ENCODE measurements at regions of chr7 and their contacts with region 1.

Region 1: DNA sequence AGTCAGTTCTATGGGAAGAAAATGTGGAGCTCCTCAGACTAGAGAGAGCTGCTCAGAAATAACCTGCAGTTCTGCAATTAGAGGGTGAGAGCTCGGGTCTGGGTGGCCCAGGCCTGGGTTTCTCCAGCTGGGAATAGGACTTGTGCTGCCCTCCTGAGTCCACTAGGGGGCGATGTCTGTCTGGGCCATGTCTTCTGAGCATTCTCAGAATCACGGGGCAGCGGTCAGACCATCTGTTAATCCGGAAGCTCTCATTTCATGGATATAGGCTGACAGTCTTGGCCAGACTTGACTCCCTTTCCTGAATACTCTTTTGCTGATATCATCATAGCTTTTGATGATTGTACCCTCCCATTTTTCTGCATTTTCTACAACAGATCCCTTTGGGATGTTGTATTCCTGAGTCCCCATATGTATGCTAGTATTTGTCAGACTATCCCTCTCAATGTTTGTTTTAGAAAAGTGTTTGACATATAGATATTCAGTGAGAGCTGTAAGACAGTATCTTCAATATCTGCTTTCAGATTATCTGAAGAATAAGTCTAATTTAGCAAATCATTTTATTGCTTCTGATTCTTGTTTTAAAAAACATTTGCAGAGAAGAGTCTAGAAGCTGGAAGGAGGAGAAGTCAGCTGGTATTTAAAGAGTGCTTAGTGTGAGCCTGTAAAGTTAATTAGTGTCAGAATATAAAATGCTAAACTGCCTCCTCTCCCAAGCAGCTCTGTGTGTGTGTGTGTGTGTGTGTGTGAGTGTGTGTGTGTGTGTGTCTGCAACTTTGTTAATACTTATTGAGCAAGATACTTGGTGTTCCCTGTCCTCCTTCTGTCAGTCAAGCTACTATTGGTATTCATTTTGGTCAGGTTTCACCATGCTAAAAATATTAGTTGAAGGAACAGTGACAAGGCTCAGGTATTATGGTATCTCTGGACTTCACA is 38.0 kb downstream of the STARD3NL start:
- DNase-seq: peak; percentile 88
- H3K4me3 ChIP-seq: no peak overlapping the region
- H3K27ac ChIP-seq: peak overlapping the region; percentile 43
- H3K4me1 ChIP-seq: peaks cover 13% of the 10 kb centered on the region
- H3K27me3 ChIP-seq: no peaks in the 10 kb centered on the region
- CTCF ChIP-seq: peak; percentile 98 to 99
- POLR2A ChIP-seq: no peak

Region 2: DNA sequence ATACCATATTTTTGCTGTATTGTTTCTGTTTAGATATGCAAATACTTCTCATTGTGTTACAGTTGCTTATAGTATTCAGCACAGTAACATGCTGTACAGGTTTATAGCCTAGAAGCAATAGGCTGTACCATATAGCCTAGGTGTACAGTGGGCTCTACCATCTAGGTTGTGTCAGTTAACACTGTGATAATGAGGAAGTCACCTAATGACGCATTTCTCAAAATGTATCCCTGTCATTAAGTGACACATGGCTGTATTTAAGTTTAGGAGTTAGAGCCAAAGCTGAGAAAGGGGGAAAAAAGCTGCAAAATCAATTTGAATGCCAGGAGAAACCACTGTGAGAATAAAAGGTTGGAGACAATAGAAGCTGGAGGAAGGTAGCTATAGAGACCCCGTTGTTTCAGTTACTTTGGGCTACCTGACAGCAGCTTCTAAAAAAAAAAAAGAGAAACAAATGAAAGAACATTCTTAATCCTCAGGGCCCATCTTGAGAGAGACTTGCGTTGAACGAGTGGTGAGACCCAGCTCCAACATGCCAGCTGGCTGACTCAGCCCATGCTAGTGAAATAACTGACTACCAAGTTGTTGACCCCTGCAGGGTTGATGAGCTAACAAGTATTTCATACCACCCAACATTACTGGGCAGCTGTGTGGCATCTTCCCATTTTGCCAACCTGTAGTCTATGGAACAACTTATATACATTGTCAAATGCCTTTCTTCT is 29.2 kb before region 1 on chr7:
- CTCF ChIA-PET with region 1: interaction called, 62 read pairs
- POLR2A ChIA-PET with region 1: no interaction called
- dilution Hi-C with region 1: no loop called
- intact Hi-C with region 1: no loop called
- DNase-seq: no peak
- H3K4me3 ChIP-seq: no peak overlapping the region
- H3K27ac ChIP-seq: no peak overlapping the region
- H3K4me1 ChIP-seq: peaks cover 5% of the 10 kb centered on the region
- H3K27me3 ChIP-seq: no peaks in the 10 kb centered on the region
- CTCF ChIP-seq: no peak
- POLR2A ChIP-seq: no peak

Region 3: DNA sequence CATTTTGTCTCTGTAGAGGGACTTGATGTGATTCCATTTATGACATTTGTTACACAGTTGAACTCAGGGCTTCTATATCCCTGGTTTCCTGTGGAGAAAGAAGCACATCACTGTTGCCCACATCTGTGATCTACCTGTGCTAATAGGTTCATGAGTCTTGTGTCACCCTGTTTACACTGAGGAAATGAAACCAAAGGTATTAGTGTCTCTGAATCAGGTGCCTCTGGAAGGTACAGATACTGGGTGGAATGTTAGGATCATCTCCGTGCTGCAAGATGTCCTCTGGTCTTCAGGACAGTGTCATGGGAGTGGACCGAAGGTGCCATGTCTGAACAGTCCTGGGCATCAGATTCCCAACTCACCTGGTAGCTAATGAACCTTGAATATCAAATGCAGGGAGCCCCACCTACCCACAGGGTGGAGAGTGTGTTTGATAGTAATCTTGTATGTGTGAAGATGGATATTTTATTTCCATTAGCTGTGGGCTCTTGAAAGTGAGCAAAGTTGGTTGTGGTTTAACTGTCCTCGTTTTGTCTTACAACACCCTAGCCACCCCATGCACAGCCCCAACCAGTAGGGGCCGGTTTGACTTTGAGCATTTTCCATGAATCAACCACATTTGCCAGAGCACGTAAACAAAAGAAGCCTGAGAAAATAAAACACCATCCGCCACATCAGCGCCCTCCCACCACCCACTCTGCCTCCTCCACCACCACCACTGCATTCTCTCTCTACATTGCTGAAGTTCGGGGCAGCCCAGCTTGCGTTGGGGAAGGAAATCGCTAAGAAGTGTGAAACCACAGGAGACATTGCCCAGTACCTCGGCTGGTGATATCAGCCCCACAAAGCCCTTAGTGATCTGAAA is 16.7 kb after region 1 on chr7:
- CTCF ChIA-PET with region 1: interaction called, 27 read pairs
- POLR2A ChIA-PET with region 1: no interaction called
- dilution Hi-C with region 1: no loop called
- intact Hi-C with region 1: no loop called
- DNase-seq: no peak
- H3K4me3 ChIP-seq: no peak overlapping the region
- H3K27ac ChIP-seq: no peak overlapping the region
- H3K4me1 ChIP-seq: no peaks in the 10 kb centered on the region
- H3K27me3 ChIP-seq: no peaks in the 10 kb centered on the region
- CTCF ChIP-seq: no peak
- POLR2A ChIP-seq: no peak

Region 4: GRCh38 chr7:38276096-38276877 is 60.3 kb after region 1 on chr7:
- CTCF ChIA-PET with region 1: no interaction called
- POLR2A ChIA-PET with region 1: no interaction called
- dilution Hi-C with region 1: no loop called
- intact Hi-C with region 1: no loop called
- DNase-seq: no peak
- H3K4me3 ChIP-seq: no peak overlapping the region
- H3K27ac ChIP-seq: no peak overlapping the region
- H3K4me1 ChIP-seq: no peaks in the 10 kb centered on the region
- H3K27me3 ChIP-seq: peaks cover 0 to 3% of the 10 kb centered on the region in 2 experiments
- CTCF ChIP-seq: no peak
- POLR2A ChIP-seq: no peak

Region 5: DNA sequence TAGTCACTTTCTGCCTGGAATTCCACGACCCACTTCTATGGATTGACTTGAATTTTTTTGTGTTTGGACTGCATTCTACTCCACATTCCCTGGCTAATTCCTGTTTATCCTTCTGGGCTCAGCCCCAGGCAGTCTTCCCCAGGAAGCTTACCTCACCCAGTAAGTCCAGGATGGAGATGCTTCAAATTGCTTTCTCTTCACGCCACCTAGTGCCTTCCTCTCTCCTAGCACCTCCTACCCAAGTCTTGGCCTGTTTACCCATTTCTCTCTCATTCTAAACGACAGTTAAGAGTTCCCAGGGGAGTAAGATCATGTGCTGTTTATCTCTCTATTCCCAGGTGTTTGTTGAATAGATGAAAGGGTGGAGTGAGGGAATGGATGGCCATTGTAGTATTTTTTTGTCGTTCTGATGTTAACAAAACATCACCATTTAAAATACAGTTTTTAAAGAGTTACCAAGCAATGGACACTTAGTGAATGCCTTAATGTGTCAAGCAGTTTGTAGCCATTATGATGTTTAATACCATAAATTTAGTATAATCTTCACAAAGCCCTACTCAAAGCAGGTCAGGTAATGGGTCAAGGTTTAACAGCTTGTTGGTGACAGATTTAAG is 102.9 kb after region 1 on chr7:
- CTCF ChIA-PET with region 1: interaction called, 61 read pairs
- POLR2A ChIA-PET with region 1: no interaction called
- dilution Hi-C with region 1: no loop called
- intact Hi-C with region 1: loop called (anchors 1 kb)
- DNase-seq: peak; percentile 74
- H3K4me3 ChIP-seq: no peak overlapping the region
- H3K27ac ChIP-seq: no peak overlapping the region
- H3K4me1 ChIP-seq: no peaks in the 10 kb centered on the region
- H3K27me3 ChIP-seq: peaks cover 0 to 1% of the 10 kb centered on the region in 2 experiments
- CTCF ChIP-seq: peak; percentile 64 to 67
- POLR2A ChIP-seq: no peak